Dendritic cell treated with granulocyte-macrophage colony-stimulating factor and Interleukin-4, amounts not matched to agents 40 ng/mL and 50 ng/mL, for 4 days (primary cell): ENCODE measurements at regions of chr12 and their contacts with region 1.

Region 1: GRCh38 chr12:6335451-6336078 is 6.3 kb downstream of the TNFRSF1A start:
- H3K4me3 Mint-ChIP-seq: no peak overlapping the region
- H3K27ac Mint-ChIP-seq: no peak overlapping the region
- H3K4me1 Mint-ChIP-seq: peaks cover 11% of the 10 kb centered on the region
- H3K27me3 Mint-ChIP-seq: no peaks in the 10 kb centered on the region

Region 2: DNA sequence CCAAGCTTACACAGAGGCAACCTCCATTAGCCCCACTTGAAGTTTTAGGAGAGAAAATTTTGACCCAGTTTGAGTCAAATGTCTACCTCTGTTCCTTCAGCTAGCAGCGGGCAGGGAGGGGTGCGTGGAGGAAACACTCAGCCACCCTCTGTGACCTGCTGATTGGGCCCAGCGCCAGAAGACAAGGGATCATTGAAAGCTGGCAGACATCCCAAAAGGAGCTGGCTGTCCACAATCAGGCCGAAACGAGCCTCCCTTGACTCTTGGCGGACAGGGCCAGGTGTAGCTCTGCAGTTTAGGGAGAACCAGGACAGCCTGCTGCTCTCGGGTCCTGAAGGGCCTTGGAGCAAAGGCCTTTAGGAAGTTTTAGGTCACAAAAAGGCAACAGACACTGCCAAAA is 94.1 kb before region 1 on chr12:
- intact Hi-C with region 1: no loop called
- H3K4me3 Mint-ChIP-seq: no peak overlapping the region
- H3K27ac Mint-ChIP-seq: no peak overlapping the region
- H3K4me1 Mint-ChIP-seq: no peaks in the 10 kb centered on the region
- H3K27me3 Mint-ChIP-seq: peaks cover 6% of the 10 kb centered on the region

Region 3: DNA sequence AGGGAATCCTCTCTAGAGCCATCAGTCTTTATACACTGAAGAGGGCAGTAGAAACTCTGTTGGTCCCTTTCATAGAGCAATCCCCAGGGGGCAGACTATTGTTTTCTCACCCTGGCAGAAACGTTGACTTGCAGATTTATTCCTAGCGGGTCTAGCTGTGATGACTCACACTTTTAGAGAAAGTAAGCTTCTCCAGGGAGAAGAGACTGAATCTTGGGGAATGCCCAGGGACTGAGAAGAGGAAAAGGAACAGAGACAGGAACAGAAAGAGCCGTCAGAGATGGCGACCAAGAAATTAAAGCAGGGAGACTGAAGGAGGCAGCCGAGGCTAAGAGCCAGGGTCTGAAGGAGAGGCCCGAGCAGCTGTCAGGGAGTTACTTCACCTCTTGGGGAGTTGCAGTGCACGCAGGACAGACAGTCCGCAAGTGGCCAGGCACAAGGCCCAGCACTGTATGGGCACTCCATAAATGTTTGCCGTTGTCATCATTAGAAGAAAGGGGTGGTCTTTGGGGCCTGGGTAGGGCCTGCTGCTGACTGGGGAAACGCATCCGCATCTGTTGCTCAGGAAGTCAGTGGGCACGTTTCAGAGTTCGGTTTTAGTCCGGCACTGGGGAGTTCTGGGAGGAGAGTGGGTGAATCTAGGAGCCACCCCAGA is 12.1 kb before region 1 on chr12:
- intact Hi-C with region 1: no loop called
- H3K4me3 Mint-ChIP-seq: peak overlapping the region; percentile 13
- H3K27ac Mint-ChIP-seq: peak overlapping the region; percentile 91
- H3K4me1 Mint-ChIP-seq: peaks cover 65% of the 10 kb centered on the region
- H3K27me3 Mint-ChIP-seq: peaks cover 19% of the 10 kb centered on the region

Region 4: DNA sequence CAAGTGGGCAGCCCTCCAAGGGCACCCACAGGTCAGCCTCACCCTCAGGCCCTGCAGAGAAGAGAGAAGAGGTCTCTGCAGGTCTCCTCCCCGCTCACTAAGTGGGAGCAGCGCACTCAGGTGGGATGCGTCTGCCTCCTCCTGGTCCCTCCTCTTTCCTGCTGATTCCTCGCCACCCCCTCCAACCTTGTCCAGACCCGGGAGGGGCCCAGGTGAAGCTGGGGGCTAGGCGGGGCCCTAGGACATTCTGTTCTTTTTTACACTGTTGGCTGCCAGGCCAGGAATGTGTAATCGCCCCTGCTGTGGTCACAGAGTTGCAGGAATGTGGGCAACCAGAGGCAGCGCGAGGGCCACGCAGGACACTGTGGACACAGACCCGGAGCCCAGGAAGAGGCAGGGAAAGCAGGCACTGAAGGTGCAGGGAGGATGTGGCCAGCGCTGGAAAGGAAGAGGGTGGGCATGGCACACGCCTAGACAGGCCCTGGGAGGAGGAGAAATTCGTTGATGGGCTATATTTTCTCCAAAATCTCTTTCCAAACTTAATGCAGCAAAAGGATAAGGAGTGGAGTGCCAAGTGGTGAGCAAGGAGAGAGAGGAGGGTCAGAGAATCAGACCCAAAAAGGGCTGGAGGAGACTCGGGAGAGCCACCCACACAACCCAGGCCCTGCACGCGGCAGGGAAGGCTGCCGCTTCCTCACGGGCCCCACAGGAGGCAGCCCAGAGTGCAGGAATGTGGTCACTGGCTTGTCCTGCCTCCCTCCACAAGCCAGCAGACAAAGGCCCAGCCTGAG is 40.7 kb after region 1 on chr12:
- intact Hi-C with region 1: loop called (anchors 5 kb)
- H3K4me3 Mint-ChIP-seq: peak overlapping the region; percentile 36
- H3K27ac Mint-ChIP-seq: peak overlapping the region; percentile 72
- H3K4me1 Mint-ChIP-seq: peaks cover 89% of the 10 kb centered on the region
- H3K27me3 Mint-ChIP-seq: peaks cover 2% of the 10 kb centered on the region

Region 5: GRCh38 chr12:6461401-6462233 is 126.1 kb after region 1 on chr12:
- intact Hi-C with region 1: loop called (anchors 5 kb)
- H3K4me3 Mint-ChIP-seq: peak overlapping the region; percentile 56
- H3K27ac Mint-ChIP-seq: peak overlapping the region; percentile 89
- H3K4me1 Mint-ChIP-seq: peaks cover 80% of the 10 kb centered on the region
- H3K27me3 Mint-ChIP-seq: no peaks in the 10 kb centered on the region